CD8-positive, alpha-beta T cell (primary cell): ENCODE measurements at regions of chr15 and their contacts with region 1.

Region 1: DNA sequence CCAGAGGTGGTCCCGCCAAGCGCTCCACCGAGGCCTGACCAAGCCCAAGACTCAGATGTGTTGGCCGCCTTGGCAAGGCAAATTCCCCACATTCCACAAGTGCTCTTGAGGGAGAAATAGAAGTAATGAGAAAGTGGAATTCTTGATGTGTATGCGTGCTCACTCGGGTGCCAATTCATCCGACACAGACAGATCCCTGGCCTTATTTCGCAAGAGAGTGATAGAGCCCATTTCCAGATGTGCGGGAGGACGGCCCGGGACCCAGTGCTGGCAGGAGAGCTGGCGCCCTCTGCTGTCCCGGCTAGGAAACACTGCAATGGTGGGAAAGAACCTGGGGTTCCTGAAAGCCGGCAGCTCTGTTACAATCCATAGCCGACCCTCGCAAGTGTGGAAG is 76.0 kb downstream of the HMG20A start:
- DNase-seq: peak; percentile 50 to 82 (median 73)
- ATAC-seq: peak; percentile 73
- H3K4me3 ChIP-seq: no peak overlapping the region
- H3K4me3 Mint-ChIP-seq: no peak overlapping the region
- H3K27ac ChIP-seq: no peak overlapping the region
- H3K27ac Mint-ChIP-seq: no peak overlapping the region
- H3K4me1 ChIP-seq: peaks cover 9% of the 10 kb centered on the region
- H3K4me1 Mint-ChIP-seq: peaks cover 17% of the 10 kb centered on the region
- H3K27me3 ChIP-seq: no peaks in the 10 kb centered on the region
- H3K27me3 Mint-ChIP-seq: no peaks in the 10 kb centered on the region
- CTCF ChIP-seq: peak; percentile 86

Region 2: GRCh38 chr15:76973362-76973743 is 523.4 kb before region 1 on chr15:
- CTCF ChIA-PET with region 1: interaction called, 29 read pairs
- POLR2A ChIA-PET with region 1: no interaction called
- intact Hi-C with region 1: loop called (anchors 1 kb)
- DNase-seq: peak; percentile 39 to 85 (median 75)
- ATAC-seq: peak; percentile 84
- H3K4me3 ChIP-seq: no peak overlapping the region
- H3K4me3 Mint-ChIP-seq: no peak overlapping the region
- H3K27ac ChIP-seq: no peak overlapping the region
- H3K27ac Mint-ChIP-seq: no peak overlapping the region
- H3K4me1 ChIP-seq: peaks cover 4% of the 10 kb centered on the region
- H3K4me1 Mint-ChIP-seq: peaks cover 14% of the 10 kb centered on the region
- H3K27me3 ChIP-seq: no peaks in the 10 kb centered on the region
- H3K27me3 Mint-ChIP-seq: no peaks in the 10 kb centered on the region
- CTCF ChIP-seq: peak; percentile 86

Region 3: GRCh38 chr15:77034695-77035489 is 461.8 kb before region 1 on chr15:
- CTCF ChIA-PET with region 1: interaction called, 3 read pairs
- POLR2A ChIA-PET with region 1: no interaction called
- intact Hi-C with region 1: loop called in 1 of 2 experiments (anchors 5 kb)
- DNase-seq: peak in 6 of 9 experiments; percentile 51 to 64 (median 60)
- ATAC-seq: peak; percentile 63
- H3K4me3 ChIP-seq: no peak overlapping the region
- H3K4me3 Mint-ChIP-seq: no peak overlapping the region
- H3K27ac ChIP-seq: peak overlapping the region in 1 of 2 experiments; percentile 36
- H3K27ac Mint-ChIP-seq: peak overlapping the region; percentile 72
- H3K4me1 ChIP-seq: no peaks in the 10 kb centered on the region
- H3K4me1 Mint-ChIP-seq: peaks cover 3% of the 10 kb centered on the region
- H3K27me3 ChIP-seq: no peaks in the 10 kb centered on the region
- H3K27me3 Mint-ChIP-seq: no peaks in the 10 kb centered on the region
- CTCF ChIP-seq: peak; percentile 31

Region 4: DNA sequence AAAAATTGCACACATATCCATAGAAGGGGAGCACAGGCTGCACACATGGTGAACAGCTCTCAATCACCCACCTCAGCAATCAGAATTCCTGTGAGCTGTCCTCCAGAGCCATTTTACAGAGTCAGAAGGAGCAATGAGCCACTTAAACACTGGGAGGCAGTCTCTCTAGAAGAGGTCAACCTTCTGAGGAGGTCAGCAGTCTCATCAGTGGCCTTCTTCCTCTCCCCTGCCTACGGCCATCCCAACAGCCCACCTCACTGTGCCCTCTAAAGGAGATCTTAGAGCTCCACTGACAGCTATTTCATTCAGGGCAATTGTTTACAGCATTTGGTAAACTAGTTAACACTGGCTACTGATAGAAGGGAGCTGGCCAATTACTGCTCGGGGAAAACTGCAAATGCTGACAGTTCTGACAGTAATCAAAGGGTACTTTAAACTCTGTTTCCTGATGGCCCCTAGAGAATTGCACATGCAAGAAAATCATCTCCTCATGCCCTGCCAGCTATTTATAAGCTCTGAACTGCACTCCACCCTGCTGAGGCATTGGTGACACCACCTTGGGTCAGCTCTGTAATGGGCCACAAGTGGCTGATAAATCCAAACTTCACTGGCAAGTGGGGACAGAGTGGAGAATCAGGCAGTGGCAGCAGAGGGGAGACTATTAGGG is 383.7 kb before region 1 on chr15:
- CTCF ChIA-PET with region 1: interaction called, 100 read pairs
- POLR2A ChIA-PET with region 1: interaction called, 4 read pairs
- intact Hi-C with region 1: loop called in 1 of 2 experiments (anchors 1 kb)
- DNase-seq: no peak
- ATAC-seq: no peak
- H3K4me3 ChIP-seq: no peak overlapping the region
- H3K4me3 Mint-ChIP-seq: no peak overlapping the region
- H3K27ac ChIP-seq: no peak overlapping the region
- H3K27ac Mint-ChIP-seq: no peak overlapping the region
- H3K4me1 ChIP-seq: no peaks in the 10 kb centered on the region
- H3K4me1 Mint-ChIP-seq: no peaks in the 10 kb centered on the region
- H3K27me3 ChIP-seq: no peaks in the 10 kb centered on the region
- H3K27me3 Mint-ChIP-seq: no peaks in the 10 kb centered on the region
- CTCF ChIP-seq: no peak

Region 5: DNA sequence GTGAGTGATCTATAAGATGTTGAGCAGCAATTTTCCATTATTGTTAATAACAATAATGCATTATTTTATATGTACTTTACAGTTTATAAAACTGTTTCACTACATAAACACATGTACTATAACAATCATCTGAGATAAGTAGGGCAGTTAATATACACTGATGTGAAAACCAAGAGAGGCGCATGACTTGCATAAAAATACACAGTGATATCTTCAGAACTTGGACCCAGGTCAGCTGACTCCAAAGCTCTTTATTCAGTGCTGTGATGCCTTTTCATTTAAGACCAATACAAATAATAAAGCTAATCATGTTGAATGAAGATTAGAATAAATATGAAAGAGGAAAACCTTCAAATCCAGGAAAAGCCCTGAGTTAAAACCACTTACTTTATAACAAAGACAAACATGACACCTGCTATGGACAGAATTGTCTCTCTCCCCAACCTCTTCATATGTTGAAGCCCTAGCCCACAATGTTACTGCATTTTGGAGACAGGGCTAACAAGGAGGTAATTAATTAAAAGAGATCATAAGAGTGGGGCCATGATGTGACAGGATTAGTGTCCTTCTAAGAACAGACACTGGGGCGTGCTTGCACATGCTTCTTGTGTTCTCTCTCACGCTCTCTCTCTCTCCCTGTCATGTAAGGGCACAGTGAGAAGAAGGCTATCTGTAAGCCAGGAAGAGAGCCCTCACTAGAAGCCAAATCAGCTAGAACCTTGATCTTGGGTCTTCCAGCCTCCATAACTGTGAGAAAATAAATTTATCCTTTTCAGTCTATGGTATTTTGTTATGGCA is 370.0 kb before region 1 on chr15:
- CTCF ChIA-PET with region 1: interaction called, 100 read pairs
- POLR2A ChIA-PET with region 1: no interaction called
- intact Hi-C with region 1: no loop called
- DNase-seq: no peak
- ATAC-seq: no peak
- H3K4me3 ChIP-seq: no peak overlapping the region
- H3K4me3 Mint-ChIP-seq: no peak overlapping the region
- H3K27ac ChIP-seq: no peak overlapping the region
- H3K27ac Mint-ChIP-seq: no peak overlapping the region
- H3K4me1 ChIP-seq: no peaks in the 10 kb centered on the region
- H3K4me1 Mint-ChIP-seq: no peaks in the 10 kb centered on the region
- H3K27me3 ChIP-seq: no peaks in the 10 kb centered on the region
- H3K27me3 Mint-ChIP-seq: no peaks in the 10 kb centered on the region
- CTCF ChIP-seq: no peak

Region 6: GRCh38 chr15:77554306-77555080 is 57.8 kb after region 1 on chr15:
- CTCF ChIA-PET with region 1: no interaction called
- POLR2A ChIA-PET with region 1: no interaction called
- intact Hi-C with region 1: no loop called
- DNase-seq: no peak
- ATAC-seq: no peak
- H3K4me3 ChIP-seq: no peak overlapping the region
- H3K4me3 Mint-ChIP-seq: no peak overlapping the region
- H3K27ac ChIP-seq: no peak overlapping the region
- H3K27ac Mint-ChIP-seq: no peak overlapping the region
- H3K4me1 ChIP-seq: no peaks in the 10 kb centered on the region
- H3K4me1 Mint-ChIP-seq: no peaks in the 10 kb centered on the region
- H3K27me3 ChIP-seq: no peaks in the 10 kb centered on the region
- H3K27me3 Mint-ChIP-seq: no peaks in the 10 kb centered on the region
- CTCF ChIP-seq: no peak